Gastrocnemius medialis (tissue), 4 donors: ENCODE measurements at regions of chr1 and their contacts with region 1.

Region 1: GRCh38 chr1:91751275-91751674 is 134.7 kb downstream of the TGFBR3 start:
- DNase-seq: peak in 1 of 2 donors; percentile 66
- ATAC-seq: peak; percentile 67 to 77
- H3K4me3 ChIP-seq: no peak overlapping the region
- H3K27ac ChIP-seq: peak overlapping the region; percentile 62 to 70 (median 67)
- H3K4me1 ChIP-seq: peaks cover 59 to 73% of the 10 kb centered on the region in 2 donors
- H3K27me3 ChIP-seq: no peaks in the 10 kb centered on the region
- CTCF ChIP-seq: no peak
- POLR2A ChIP-seq: peak in 1 of 2 donors; percentile 11

Region 2: GRCh38 chr1:91725989-91726721 is 25.1 kb before region 1 on chr1:
- in situ Hi-C with region 1: no loop called
- intact Hi-C with region 1: loop called (anchors 2 kb)
- DNase-seq: peak; percentile 66 to 70
- ATAC-seq: peak; percentile 92
- H3K4me3 ChIP-seq: no peak overlapping the region
- H3K27ac ChIP-seq: peak overlapping the region; percentile 85 to 93 (median 88)
- H3K4me1 ChIP-seq: peaks cover 55 to 59% of the 10 kb centered on the region in 2 donors
- H3K27me3 ChIP-seq: no peaks in the 10 kb centered on the region
- CTCF ChIP-seq: no peak
- POLR2A ChIP-seq: peak in 1 of 2 donors; percentile 57

Region 3: GRCh38 chr1:91846007-91846617 is 94.8 kb after region 1 on chr1:
- in situ Hi-C with region 1: no loop called
- intact Hi-C with region 1: loop called (anchors 5 kb)
- DNase-seq: peak; percentile 29 to 38
- ATAC-seq: peak; percentile 47 to 51
- H3K4me3 ChIP-seq: peak overlapping the region in 1 of 4 donors; percentile 3
- H3K27ac ChIP-seq: peak overlapping the region; percentile 68 to 75 (median 74)
- H3K4me1 ChIP-seq: peaks cover 30 to 38% of the 10 kb centered on the region in 2 donors
- H3K27me3 ChIP-seq: no peaks in the 10 kb centered on the region
- CTCF ChIP-seq: no peak
- POLR2A ChIP-seq: no peak